IMR-90 (cell line): ENCODE measurements at regions of chr20 and their contacts with region 1.

Region 1: DNA sequence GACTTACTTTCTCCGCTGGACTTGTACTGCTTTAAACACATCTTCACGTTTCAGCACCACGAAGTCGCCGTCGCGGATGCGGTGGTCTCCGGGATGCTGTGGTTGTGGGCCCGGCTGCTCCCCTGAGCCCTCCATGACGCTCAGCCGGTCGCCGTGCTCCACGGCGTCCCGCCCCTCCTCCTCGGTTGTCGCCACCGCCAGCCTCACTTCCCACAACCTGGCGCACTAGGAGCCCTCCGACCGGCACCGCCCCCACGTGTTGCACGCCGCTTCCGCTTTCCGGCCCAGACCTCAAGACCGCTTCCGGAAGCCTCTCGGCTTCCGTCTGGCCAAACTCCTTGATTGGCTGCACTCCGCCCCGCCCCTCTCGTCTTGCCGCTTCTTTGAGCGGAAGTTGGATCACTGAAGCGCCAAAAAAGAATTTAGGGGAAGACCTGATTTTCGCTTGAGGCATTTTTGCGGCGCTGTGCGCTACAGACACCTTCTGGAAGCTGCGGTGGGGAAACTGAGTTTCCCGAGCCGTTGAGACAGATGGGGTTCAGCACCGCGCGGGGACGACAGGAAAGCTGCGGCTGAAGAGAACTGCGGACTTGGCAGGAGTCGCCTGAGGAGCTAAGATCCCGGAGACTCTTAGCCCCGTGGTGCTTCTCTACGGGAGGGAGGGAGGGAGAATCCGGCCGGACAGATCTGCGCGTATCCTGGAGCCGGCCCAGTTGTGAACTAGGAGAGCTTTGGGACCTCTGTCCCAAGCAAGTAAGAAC is at the starts of genes MCM8 and TRMT6:
- DNase-seq: peak; percentile 94
- ATAC-seq: peak; percentile 99
- H3K4me3 ChIP-seq: peak within 1 kb of the TSS; percentile 65
- H3K27ac ChIP-seq: peak within 1 kb of the TSS; percentile 61
- H3K4me1 ChIP-seq: no peaks in the 10 kb centered on the region
- H3K27me3 ChIP-seq: no peaks in the 10 kb centered on the region
- CTCF ChIP-seq: no peak
- POLR2A ChIP-seq: peak; percentile 59; the same call in 1 of the 2 replicates
- RAD21 ChIP-seq: no peak
- total RNA-seq, gene MCM8: 11.5 and 13.9 TPM in 2 replicates
- total RNA-seq, gene TRMT6: 7.2 and 10.0 TPM in 2 replicates

Region 2: DNA sequence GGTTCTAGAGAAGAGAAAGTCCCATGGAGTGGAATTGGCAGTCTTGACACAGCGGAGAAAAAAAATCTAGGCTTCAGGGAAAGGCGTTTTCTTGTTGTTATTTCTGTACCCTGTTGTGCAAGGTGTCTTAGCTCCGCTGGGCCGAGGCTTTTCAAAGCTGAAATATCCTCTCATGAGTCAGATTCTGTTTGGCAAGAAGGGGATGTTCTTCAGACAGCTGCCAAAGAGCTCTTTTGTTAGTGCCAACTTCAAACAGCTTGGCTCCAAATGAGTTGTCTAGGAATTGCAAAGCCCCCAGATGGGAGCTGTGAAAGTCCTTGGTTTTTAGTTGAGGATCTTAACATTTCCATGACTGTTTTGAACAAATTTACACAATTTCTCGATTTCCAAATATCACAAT is 57.8 kb after region 1 on chr20:
- CTCF ChIA-PET with region 1: no interaction called
- POLR2A ChIA-PET with region 1: no interaction called
- dilution Hi-C with region 1: no loop called
- in situ Hi-C with region 1: no loop called
- intact Hi-C with region 1: loop called (anchors 2 kb)
- DNase-seq: peak; percentile 92
- ATAC-seq: no peak; the same call in 1 of the 2 replicates
- H3K4me3 ChIP-seq: no peak overlapping the region; the same call in 1 of the 2 replicates
- H3K27ac ChIP-seq: no peak overlapping the region
- H3K4me1 ChIP-seq: peaks cover 3% of the 10 kb centered on the region
- H3K27me3 ChIP-seq: no peaks in the 10 kb centered on the region
- CTCF ChIP-seq: no peak
- POLR2A ChIP-seq: no peak
- RAD21 ChIP-seq: no peak

Region 3: DNA sequence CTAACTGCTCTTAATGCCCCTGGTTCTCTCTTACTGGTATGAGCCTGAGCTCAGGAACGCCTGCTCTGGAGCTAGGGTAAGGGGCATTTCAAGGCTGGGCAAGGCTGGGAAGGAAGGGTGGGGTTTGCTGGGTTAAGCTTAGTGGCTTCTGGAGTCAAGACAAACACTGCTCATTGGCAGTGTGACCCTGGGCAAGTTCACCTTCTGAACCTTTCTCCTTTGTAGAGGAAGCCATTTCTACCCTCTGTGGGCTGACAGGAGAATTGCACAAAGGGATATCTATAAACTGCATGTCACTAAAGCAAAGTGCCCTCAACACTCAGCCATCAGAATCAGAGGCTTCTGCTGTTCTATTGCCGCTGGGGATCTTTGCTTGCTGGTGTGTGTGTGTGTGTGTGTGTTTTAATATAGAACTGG is 123.7 kb after region 1 on chr20:
- CTCF ChIA-PET with region 1: no interaction called
- POLR2A ChIA-PET with region 1: no interaction called
- dilution Hi-C with region 1: no loop called
- in situ Hi-C with region 1: no loop called
- intact Hi-C with region 1: loop called (anchors 2 kb)
- DNase-seq: no peak
- ATAC-seq: peak; percentile 70
- H3K4me3 ChIP-seq: no peak overlapping the region
- H3K27ac ChIP-seq: no peak overlapping the region
- H3K4me1 ChIP-seq: no peaks in the 10 kb centered on the region
- H3K27me3 ChIP-seq: no peaks in the 10 kb centered on the region
- CTCF ChIP-seq: peak; percentile 15; the same call in 1 of the 2 replicates
- POLR2A ChIP-seq: no peak
- RAD21 ChIP-seq: no peak

Region 4: GRCh38 chr20:6993016-6993415 is 1042.6 kb after region 1 on chr20:
- CTCF ChIA-PET with region 1: no interaction called
- POLR2A ChIA-PET with region 1: no interaction called
- dilution Hi-C with region 1: no loop called
- in situ Hi-C with region 1: no loop called
- intact Hi-C with region 1: no loop called
- DNase-seq: no peak
- ATAC-seq: no peak
- H3K4me3 ChIP-seq: no peak overlapping the region
- H3K27ac ChIP-seq: no peak overlapping the region
- H3K4me1 ChIP-seq: no peaks in the 10 kb centered on the region
- H3K27me3 ChIP-seq: no peaks in the 10 kb centered on the region
- CTCF ChIP-seq: no peak
- POLR2A ChIP-seq: no peak
- RAD21 ChIP-seq: no peak